CD4-positive, alpha-beta memory T cell (primary cell): ENCODE measurements at regions of chr9 and their contacts with region 1.

Region 1: DNA sequence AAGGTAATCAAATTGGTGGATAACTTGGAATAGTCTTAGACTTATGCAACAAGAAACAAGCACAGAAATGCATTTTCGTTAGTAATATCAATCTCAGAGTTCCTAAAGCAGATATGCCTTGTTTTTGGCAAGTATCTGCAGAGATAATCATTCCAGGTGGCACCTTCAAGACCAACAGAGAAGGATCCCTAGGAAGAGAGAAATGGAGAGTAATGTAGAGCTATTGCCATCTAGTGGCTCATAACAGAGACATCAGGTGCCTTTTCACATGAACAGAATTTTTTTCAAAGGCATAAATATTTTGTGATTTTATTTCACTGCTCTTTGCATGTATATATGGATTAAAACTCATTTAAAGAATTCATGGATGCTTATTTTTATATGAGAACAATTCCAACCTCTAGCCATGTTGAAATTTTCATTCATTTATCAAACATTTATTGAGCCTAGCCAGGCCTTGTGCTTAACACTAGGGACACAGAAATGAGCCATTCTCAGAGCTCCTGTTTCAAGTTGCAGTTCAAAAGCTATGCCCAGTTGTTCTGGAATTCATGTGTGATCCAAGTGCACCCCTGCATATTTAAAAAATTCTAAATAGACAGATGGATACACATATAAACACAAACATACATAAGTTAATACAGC is 117.5 kb upstream of the OR13F1 start:
- DNase-seq: no peak
- H3K4me3 ChIP-seq: no peak overlapping the region
- H3K4me3 Mint-ChIP-seq: no peak overlapping the region
- H3K27ac ChIP-seq: no peak overlapping the region
- H3K27ac Mint-ChIP-seq: no peak overlapping the region
- H3K4me1 ChIP-seq: no peaks in the 10 kb centered on the region
- H3K4me1 Mint-ChIP-seq: no peaks in the 10 kb centered on the region
- H3K27me3 ChIP-seq: no peaks in the 10 kb centered on the region
- H3K27me3 Mint-ChIP-seq: no peaks in the 10 kb centered on the region

Region 2: DNA sequence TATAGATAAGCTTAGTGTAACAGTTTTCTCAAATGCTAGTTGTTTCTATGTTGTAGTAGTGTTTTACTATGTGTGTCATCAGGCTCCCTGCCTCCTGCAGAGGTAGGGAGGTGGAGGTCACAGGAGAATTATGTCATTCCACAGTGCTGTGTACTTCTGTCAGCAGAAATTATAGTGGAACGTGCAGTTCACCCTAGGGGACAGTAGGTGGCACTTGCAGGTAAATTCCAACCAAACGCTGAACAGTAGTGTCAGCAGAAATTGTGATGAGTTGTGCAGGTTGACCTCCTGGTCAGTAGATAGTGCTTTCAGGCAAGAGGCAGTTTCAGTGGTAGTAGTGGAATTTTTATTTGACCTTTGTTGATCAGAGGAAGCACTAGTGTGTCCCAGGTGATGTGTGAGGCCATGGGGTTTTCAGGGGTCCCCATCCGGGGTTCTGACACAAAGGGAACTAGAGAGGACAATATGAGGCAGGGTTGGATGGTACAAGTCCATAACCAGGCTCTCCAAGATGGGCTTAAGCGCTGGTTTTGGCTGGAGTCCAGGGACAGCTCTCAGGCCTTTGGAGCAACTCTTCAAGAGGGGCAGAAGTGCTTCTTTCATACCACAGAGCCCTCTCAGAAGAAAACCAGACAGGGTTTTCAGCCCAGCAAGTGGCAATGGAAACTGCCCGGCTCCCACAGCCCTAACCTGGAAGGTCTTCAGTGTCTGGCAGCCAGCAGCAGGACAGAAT is 988.5 kb before region 1 on chr9:
- CTCF ChIA-PET with region 1: no interaction called
- POLR2A ChIA-PET with region 1: no interaction called
- intact Hi-C with region 1: loop called (anchors 5 kb)
- DNase-seq: peak in 3 of 5 donors; percentile 9 to 13 (median 12)
- H3K4me3 ChIP-seq: no peak overlapping the region
- H3K4me3 Mint-ChIP-seq: no peak overlapping the region
- H3K27ac ChIP-seq: no peak overlapping the region
- H3K27ac Mint-ChIP-seq: no peak overlapping the region
- H3K4me1 ChIP-seq: no peaks in the 10 kb centered on the region
- H3K4me1 Mint-ChIP-seq: no peaks in the 10 kb centered on the region
- H3K27me3 ChIP-seq: no peaks in the 10 kb centered on the region
- H3K27me3 Mint-ChIP-seq: no peaks in the 10 kb centered on the region

Region 3: GRCh38 chr9:104339692-104340091 is 46.9 kb before region 1 on chr9:
- CTCF ChIA-PET with region 1: no interaction called
- POLR2A ChIA-PET with region 1: no interaction called
- intact Hi-C with region 1: no loop called
- DNase-seq: no peak
- H3K4me3 ChIP-seq: no peak overlapping the region
- H3K4me3 Mint-ChIP-seq: no peak overlapping the region
- H3K27ac ChIP-seq: no peak overlapping the region
- H3K27ac Mint-ChIP-seq: no peak overlapping the region
- H3K4me1 ChIP-seq: no peaks in the 10 kb centered on the region
- H3K4me1 Mint-ChIP-seq: no peaks in the 10 kb centered on the region
- H3K27me3 ChIP-seq: no peaks in the 10 kb centered on the region
- H3K27me3 Mint-ChIP-seq: no peaks in the 10 kb centered on the region